ENCODE measurements at regions of chr6 and their contacts with region 1.

Region 1: DNA sequence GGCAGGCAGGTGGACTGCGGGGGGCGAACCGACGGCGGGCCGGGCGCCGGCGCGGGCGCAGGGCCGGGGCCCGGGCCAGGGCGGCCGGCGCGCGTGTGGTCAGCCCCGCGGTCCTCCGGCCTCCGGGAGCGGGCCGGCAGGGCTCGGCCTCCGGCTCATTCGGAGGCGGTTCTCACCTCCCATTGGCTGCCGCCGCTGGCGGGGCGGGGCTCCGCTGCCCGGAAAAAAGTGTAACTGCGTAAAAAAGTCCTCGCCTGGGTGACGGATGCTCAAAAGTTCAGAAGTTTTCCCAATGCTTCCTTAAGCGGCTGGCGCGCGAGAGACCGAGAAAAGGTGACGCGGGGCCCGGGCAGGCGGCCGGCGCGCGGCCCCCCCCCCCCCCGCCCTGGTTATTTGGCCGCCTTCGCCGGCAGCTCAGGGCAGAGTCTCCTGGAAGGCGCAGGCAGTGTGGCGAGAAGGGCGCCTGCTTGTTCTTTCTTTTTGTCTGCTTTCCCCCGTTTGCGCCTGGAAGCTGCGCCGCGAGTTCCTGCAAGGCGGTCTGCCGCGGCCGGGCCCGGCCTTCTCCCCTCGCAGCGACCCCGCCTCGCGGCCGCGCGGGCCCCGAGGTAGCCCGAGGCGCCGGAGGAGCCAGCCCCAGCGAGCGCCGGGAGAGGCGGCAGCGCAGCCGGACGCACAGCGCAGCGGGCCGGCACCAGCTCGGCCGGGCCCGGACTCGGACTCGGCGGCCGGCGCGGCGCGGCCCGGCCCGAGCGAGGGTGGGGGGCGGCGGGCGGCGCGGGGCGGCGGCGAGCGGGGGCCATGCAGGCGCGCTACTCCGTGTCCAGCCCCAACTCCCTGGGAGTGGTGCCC is at the start of gene FOXC1:
- DNase-seq: peak; percentile 97
- H3K4me3 ChIP-seq: peak within 1 kb of the TSS; percentile 69 to 89 (median 87)
- H3K27ac ChIP-seq: peak within 1 kb of the TSS; percentile 70
- H3K4me1 ChIP-seq: no peaks in the 10 kb centered on the region
- H3K27me3 ChIP-seq: peaks cover 10 to 13% of the 10 kb centered on the region in 2 experiments
- CTCF ChIP-seq: no peak
- POLR2A ChIP-seq: peak; percentile 88
- total RNA-seq, gene FOXC1: 15.9 and 16.4 TPM in 2 replicates

Region 2: GRCh38 chr6:701700-702479 is 908.0 kb before region 1 on chr6:
- CTCF ChIA-PET with region 1: no interaction called
- POLR2A ChIA-PET with region 1: no interaction called
- dilution Hi-C with region 1: no loop called
- intact Hi-C with region 1: loop called (anchors 5 kb)
- DNase-seq: no peak
- H3K4me3 ChIP-seq: no peak overlapping the region
- H3K27ac ChIP-seq: no peak overlapping the region
- H3K4me1 ChIP-seq: peaks cover 44% of the 10 kb centered on the region
- H3K27me3 ChIP-seq: no peaks in the 10 kb centered on the region
- CTCF ChIP-seq: no peak
- POLR2A ChIP-seq: no peak

Region 3: GRCh38 chr6:1787894-1788293 is 178.0 kb after region 1 on chr6:
- CTCF ChIA-PET with region 1: no interaction called
- POLR2A ChIA-PET with region 1: interaction called, 3 read pairs
- dilution Hi-C with region 1: no loop called
- intact Hi-C with region 1: loop called (anchors 2 kb)
- DNase-seq: peak; percentile 92
- H3K4me3 ChIP-seq: no peak overlapping the region
- H3K27ac ChIP-seq: peak overlapping the region; percentile 84
- H3K4me1 ChIP-seq: peaks cover 45% of the 10 kb centered on the region
- H3K27me3 ChIP-seq: no peaks in the 10 kb centered on the region
- CTCF ChIP-seq: no peak
- POLR2A ChIP-seq: no peak

Region 4: GRCh38 chr6:2111162-2111677 is 501.3 kb after region 1 on chr6:
- CTCF ChIA-PET with region 1: interaction called, 6 read pairs
- POLR2A ChIA-PET with region 1: no interaction called
- dilution Hi-C with region 1: loop called (anchors 25 kb)
- intact Hi-C with region 1: loop called (anchors 1 kb)
- DNase-seq: peak; percentile 97
- H3K4me3 ChIP-seq: peak overlapping the region in 1 of 3 experiments; percentile 51
- H3K27ac ChIP-seq: peak overlapping the region; percentile 76
- H3K4me1 ChIP-seq: peaks cover 40% of the 10 kb centered on the region
- H3K27me3 ChIP-seq: no peaks in the 10 kb centered on the region
- CTCF ChIP-seq: no peak
- POLR2A ChIP-seq: no peak

Region 5: DNA sequence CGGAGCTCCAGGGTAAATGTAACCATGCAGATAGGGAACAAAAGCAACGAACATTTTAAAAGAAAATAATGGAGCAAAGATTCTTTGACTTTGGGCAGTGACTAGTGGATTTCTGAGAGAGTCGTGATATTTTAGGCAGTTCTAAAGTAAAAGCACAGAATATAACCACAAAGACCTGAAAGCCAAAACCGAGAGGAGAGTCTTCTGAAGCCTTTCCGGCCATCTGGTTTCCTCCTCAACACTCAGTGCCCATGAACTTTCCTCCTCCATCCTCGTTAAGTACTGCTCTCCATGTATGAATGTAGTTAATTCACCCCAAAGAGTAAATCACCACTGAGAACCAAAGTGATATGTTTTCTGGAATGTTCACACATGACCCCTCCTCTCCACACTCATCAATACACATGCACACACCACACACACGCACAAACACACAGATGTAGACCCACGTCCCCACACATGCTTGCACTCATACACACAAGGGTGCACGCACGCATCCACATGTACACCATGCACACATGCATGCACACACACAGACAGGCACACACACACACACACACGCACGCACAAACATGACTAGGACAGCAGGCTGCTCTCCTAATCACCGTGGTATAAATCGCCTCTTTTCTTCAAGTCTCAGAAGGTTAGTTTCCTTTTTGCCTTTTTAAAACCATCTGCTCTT is 1031.3 kb after region 1 on chr6:
- CTCF ChIA-PET with region 1: no interaction called
- POLR2A ChIA-PET with region 1: no interaction called
- dilution Hi-C with region 1: loop called (anchors 10 kb)
- intact Hi-C with region 1: no loop called
- DNase-seq: no peak
- H3K4me3 ChIP-seq: no peak overlapping the region
- H3K27ac ChIP-seq: no peak overlapping the region
- H3K4me1 ChIP-seq: no peaks in the 10 kb centered on the region
- H3K27me3 ChIP-seq: peaks cover 0 to 14% of the 10 kb centered on the region in 2 experiments
- CTCF ChIP-seq: no peak
- POLR2A ChIP-seq: no peak

Region 6: GRCh38 chr6:3068329-3069214 is 1458.7 kb after region 1 on chr6 and contains the start of gene RIPK1:
- CTCF ChIA-PET with region 1: no interaction called
- POLR2A ChIA-PET with region 1: no interaction called
- dilution Hi-C with region 1: no loop called
- intact Hi-C with region 1: loop called (anchors 10 kb)
- DNase-seq: peak; percentile 82
- H3K4me3 ChIP-seq: peak within 1 kb of the TSS; percentile 66 to 92 (median 78)
- H3K27ac ChIP-seq: peak within 1 kb of the TSS; percentile 73
- H3K4me1 ChIP-seq: peaks cover 9% of the 10 kb centered on the region
- H3K27me3 ChIP-seq: peaks cover 0 to 7% of the 10 kb centered on the region in 2 experiments
- CTCF ChIP-seq: peak in 1 of 2 donors; percentile 14
- POLR2A ChIP-seq: peak; percentile 78
- total RNA-seq, gene RIPK1: 20.2 and 20.6 TPM in 2 replicates

Measured in endothelial cell of umbilical vein (primary cell).